ENCODE measurements at regions of chr2 and their contacts with region 1.

Region 1: DNA sequence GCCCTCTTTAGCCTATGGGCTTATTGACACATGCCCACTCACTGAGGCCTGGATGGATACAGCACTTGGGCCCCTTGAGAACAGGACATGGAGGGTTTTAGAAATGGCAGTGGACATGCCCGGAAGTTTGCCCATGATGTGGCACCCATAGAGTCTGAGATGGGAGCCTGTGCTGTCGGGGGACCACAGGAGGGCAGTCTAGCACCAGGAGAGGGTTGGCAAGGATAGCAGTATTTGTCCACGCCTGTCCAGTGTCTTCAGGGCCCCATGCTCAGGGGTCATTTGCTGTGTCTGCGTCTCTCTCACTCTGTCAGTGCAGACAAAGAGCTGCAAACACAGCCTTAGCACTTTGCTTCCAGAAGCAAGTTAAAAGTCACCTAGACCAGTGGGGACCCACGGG is 48.7 kb downstream of the IL1RL2 start:
- DNase-seq: peak in 1 of 2 donors; percentile 31
- H3K4me3 ChIP-seq: no peak overlapping the region
- H3K27ac ChIP-seq: no peak overlapping the region
- H3K4me1 ChIP-seq: peaks cover 1 to 18% (median 13%) of the 10 kb centered on the region in 4 donors
- H3K27me3 ChIP-seq: no peaks in the 10 kb centered on the region
- CTCF ChIP-seq: no peak
- EP300 ChIP-seq: no peak
- POLR2A ChIP-seq: no peak

Region 2: DNA sequence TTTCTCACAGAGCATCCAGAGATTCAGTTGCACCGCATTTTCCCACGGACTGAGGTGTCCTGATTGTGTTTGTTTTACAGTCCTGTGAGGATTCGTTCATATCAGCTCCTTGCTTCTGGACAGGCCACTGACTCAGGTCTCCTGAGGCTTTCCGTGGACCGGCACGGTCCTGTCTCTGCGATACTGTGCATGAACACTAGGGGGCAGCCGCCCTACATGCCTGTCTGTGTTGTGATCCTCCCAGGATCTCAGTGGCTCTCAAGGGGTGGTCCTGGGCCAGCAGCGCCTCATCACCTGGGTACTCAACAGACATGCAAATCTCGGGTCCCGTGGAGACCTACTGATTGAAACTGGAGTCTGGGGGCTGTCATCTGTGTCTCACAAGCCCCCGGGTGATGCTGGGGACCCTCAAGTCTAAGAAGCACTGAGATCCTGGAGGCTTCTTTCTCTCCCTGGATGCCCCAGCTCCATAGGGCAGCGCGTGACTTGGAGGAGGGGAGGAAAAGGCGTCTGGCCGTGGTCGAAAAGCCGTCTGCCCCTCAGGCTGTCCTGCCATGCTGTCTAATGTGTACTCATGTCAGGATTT is 214.8 kb before region 1 on chr2:
- intact Hi-C with region 1: loop called (anchors 5 kb)
- DNase-seq: peak; percentile 91 to 93
- H3K4me3 ChIP-seq: no peak overlapping the region
- H3K27ac ChIP-seq: peak overlapping the region in 3 of 5 donors; percentile 6 to 67 (median 62)
- H3K4me1 ChIP-seq: peaks cover 0 to 29% (median 6%) of the 10 kb centered on the region in 4 donors
- H3K27me3 ChIP-seq: no peaks in the 10 kb centered on the region
- CTCF ChIP-seq: peak in 5 of 7 experiments; percentile 97 to 98 (median 98)
- EP300 ChIP-seq: no peak
- POLR2A ChIP-seq: no peak

Region 3: GRCh38 chr2:102187496-102188150 is 47.9 kb before region 1 on chr2:
- intact Hi-C with region 1: loop called (anchors 10 kb)
- DNase-seq: peak; percentile 49 to 77
- H3K4me3 ChIP-seq: peak overlapping the region; percentile 53 to 56 (median 55)
- H3K27ac ChIP-seq: peak overlapping the region; percentile 34 to 82 (median 62)
- H3K4me1 ChIP-seq: peaks cover 6 to 19% (median 14%) of the 10 kb centered on the region in 4 donors
- H3K27me3 ChIP-seq: no peaks in the 10 kb centered on the region
- CTCF ChIP-seq: peak in 5 of 7 experiments; percentile 22 to 29 (median 24)
- EP300 ChIP-seq: no peak
- POLR2A ChIP-seq: no peak